Caco-2 (cell line): ENCODE measurements at regions of chr2 and their contacts with region 1.

Region 1: GRCh38 chr2:223797811-223798721 is 39.3 kb downstream of the AP1S3 start:
- DNase-seq: peak in 1 of 2 experiments; percentile 50
- H3K4me3 ChIP-seq: no peak overlapping the region
- H3K4me3 Mint-ChIP-seq: peak overlapping the region; percentile 12
- H3K27ac Mint-ChIP-seq: peak overlapping the region; percentile 75
- H3K4me1 ChIP-seq: peaks cover 90% of the 10 kb centered on the region
- H3K4me1 Mint-ChIP-seq: peaks cover 55% of the 10 kb centered on the region
- H3K27me3 ChIP-seq: no peaks in the 10 kb centered on the region
- H3K27me3 Mint-ChIP-seq: no peaks in the 10 kb centered on the region
- CTCF ChIP-seq: peak; percentile 56 to 72

Region 2: DNA sequence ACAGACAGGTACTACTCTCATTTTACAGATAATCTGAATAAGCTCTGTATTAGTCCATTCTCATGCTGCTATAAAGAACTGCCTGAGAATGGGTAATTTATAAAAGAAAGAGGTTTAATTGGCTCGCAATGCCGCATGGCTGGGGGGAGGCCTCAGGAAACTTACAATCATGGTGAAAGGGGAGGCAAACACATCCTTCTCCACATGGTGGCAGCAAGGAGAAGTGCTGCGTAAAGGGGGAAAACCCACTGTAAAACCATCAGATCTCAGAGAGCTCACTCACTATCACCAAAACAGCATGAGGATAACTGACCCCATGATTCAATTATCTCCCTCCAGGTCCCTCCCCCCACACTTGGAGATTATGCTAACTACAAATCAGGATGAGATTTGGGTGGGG is 491.7 kb before region 1 on chr2:
- CTCF ChIA-PET with region 1: no interaction called
- POLR2A ChIA-PET with region 1: no interaction called
- intact Hi-C with region 1: loop called (anchors 1 kb)
- DNase-seq: peak in 1 of 2 experiments; percentile 36
- H3K4me3 ChIP-seq: no peak overlapping the region
- H3K4me3 Mint-ChIP-seq: no peak overlapping the region
- H3K27ac Mint-ChIP-seq: no peak overlapping the region
- H3K4me1 ChIP-seq: no peaks in the 10 kb centered on the region
- H3K4me1 Mint-ChIP-seq: no peaks in the 10 kb centered on the region
- H3K27me3 ChIP-seq: no peaks in the 10 kb centered on the region; the same call in 1 of the 2 replicates
- H3K27me3 Mint-ChIP-seq: peaks cover 3% of the 10 kb centered on the region
- CTCF ChIP-seq: peak; percentile 71 to 74

Region 3: GRCh38 chr2:223674998-223675609 is 123.0 kb before region 1 on chr2:
- CTCF ChIA-PET with region 1: interaction called, 6 read pairs
- POLR2A ChIA-PET with region 1: no interaction called
- intact Hi-C with region 1: loop called (anchors 1 kb)
- DNase-seq: peak; percentile 52 to 70
- H3K4me3 ChIP-seq: no peak overlapping the region
- H3K4me3 Mint-ChIP-seq: no peak overlapping the region
- H3K27ac Mint-ChIP-seq: no peak overlapping the region
- H3K4me1 ChIP-seq: no peaks in the 10 kb centered on the region
- H3K4me1 Mint-ChIP-seq: peaks cover 7% of the 10 kb centered on the region
- H3K27me3 ChIP-seq: no peaks in the 10 kb centered on the region
- H3K27me3 Mint-ChIP-seq: peaks cover 3% of the 10 kb centered on the region
- CTCF ChIP-seq: peak; percentile 88 to 97

Region 4: GRCh38 chr2:223727562-223727961 is 70.5 kb before region 1 on chr2:
- CTCF ChIA-PET with region 1: interaction called, 4 read pairs
- POLR2A ChIA-PET with region 1: no interaction called
- intact Hi-C with region 1: loop called (anchors 1 kb)
- DNase-seq: peak; percentile 72 to 73
- H3K4me3 ChIP-seq: no peak overlapping the region
- H3K4me3 Mint-ChIP-seq: no peak overlapping the region
- H3K27ac Mint-ChIP-seq: no peak overlapping the region
- H3K4me1 ChIP-seq: peaks cover 32% of the 10 kb centered on the region
- H3K4me1 Mint-ChIP-seq: peaks cover 21% of the 10 kb centered on the region
- H3K27me3 ChIP-seq: no peaks in the 10 kb centered on the region
- H3K27me3 Mint-ChIP-seq: no peaks in the 10 kb centered on the region
- CTCF ChIP-seq: peak; percentile 82 to 88

Region 5: GRCh38 chr2:223815186-223815883 is 17.3 kb after region 1 on chr2:
- CTCF ChIA-PET with region 1: no interaction called
- POLR2A ChIA-PET with region 1: no interaction called
- intact Hi-C with region 1: no loop called
- DNase-seq: no peak
- H3K4me3 ChIP-seq: no peak overlapping the region
- H3K4me3 Mint-ChIP-seq: no peak overlapping the region
- H3K27ac Mint-ChIP-seq: peak overlapping the region; percentile 42
- H3K4me1 ChIP-seq: peaks cover 18% of the 10 kb centered on the region
- H3K4me1 Mint-ChIP-seq: peaks cover 29% of the 10 kb centered on the region
- H3K27me3 ChIP-seq: no peaks in the 10 kb centered on the region
- H3K27me3 Mint-ChIP-seq: no peaks in the 10 kb centered on the region
- CTCF ChIP-seq: no peak

Region 6: GRCh38 chr2:223837287-223838061 is 39.4 kb after region 1 on chr2 and contains the start of gene AP1S3:
- CTCF ChIA-PET with region 1: interaction called, 6 read pairs
- POLR2A ChIA-PET with region 1: no interaction called
- intact Hi-C with region 1: loop called (anchors 1 kb)
- DNase-seq: peak; percentile 97 to 98
- H3K4me3 ChIP-seq: peak within 1 kb of the TSS; percentile 80
- H3K4me3 Mint-ChIP-seq: peak within 1 kb of the TSS; percentile 90
- H3K27ac Mint-ChIP-seq: peak within 1 kb of the TSS; percentile 75
- H3K4me1 ChIP-seq: peaks cover 40% of the 10 kb centered on the region
- H3K4me1 Mint-ChIP-seq: peaks cover 48% of the 10 kb centered on the region
- H3K27me3 ChIP-seq: no peaks in the 10 kb centered on the region
- H3K27me3 Mint-ChIP-seq: no peaks in the 10 kb centered on the region
- CTCF ChIP-seq: peak in 1 of 2 experiments; percentile 21
- total RNA-seq, gene AP1S3: 180 TPM in 2 replicates

Region 7: DNA sequence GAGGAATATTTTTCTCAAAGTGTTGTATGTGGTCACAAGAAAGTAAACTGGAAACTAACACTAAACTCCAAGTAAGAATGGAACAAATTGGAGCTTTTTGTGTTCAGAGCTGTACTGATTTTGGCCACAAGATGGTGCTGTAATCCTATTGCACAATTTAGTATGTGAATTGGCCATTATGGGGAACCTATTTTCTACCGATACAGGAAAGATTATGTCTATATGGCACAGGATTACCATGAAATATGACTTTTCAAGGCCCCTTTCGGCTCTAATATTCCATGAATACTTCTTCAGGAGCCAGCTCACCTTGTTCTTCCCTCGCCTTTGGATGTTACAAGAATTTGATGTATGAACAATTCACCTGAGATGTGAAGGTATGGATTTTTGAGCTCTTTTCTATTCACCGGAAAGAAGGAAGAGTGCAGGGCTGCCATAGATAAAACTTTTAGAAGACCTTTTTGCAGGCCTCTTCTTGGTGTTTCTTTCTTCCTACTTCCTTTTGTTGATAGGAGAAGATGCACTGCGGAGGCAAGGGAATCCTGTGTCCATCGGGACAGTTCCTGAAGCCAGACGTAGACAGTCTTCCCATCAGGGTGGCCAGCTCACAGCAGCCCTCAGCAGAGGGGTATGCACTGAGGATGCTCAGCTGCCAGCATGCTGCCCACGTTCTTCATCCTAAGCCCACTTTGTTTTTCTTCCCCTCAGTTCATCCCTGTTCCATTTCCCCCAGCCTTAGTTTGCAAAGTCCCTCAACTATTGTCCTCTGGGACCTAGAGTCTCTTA is 172.5 kb after region 1 on chr2:
- CTCF ChIA-PET with region 1: no interaction called
- POLR2A ChIA-PET with region 1: no interaction called
- intact Hi-C with region 1: no loop called
- DNase-seq: peak in 1 of 2 experiments; percentile 76
- H3K4me3 ChIP-seq: no peak overlapping the region
- H3K4me3 Mint-ChIP-seq: no peak overlapping the region
- H3K27ac Mint-ChIP-seq: no peak overlapping the region
- H3K4me1 ChIP-seq: no peaks in the 10 kb centered on the region
- H3K4me1 Mint-ChIP-seq: no peaks in the 10 kb centered on the region
- H3K27me3 ChIP-seq: no peaks in the 10 kb centered on the region
- H3K27me3 Mint-ChIP-seq: no peaks in the 10 kb centered on the region
- CTCF ChIP-seq: peak; percentile 95 to 98

Region 8: GRCh38 chr2:224461391-224461790 is 663.3 kb after region 1 on chr2:
- CTCF ChIA-PET with region 1: no interaction called
- POLR2A ChIA-PET with region 1: no interaction called
- intact Hi-C with region 1: no loop called
- DNase-seq: no peak
- H3K4me3 ChIP-seq: no peak overlapping the region
- H3K4me3 Mint-ChIP-seq: no peak overlapping the region
- H3K27ac Mint-ChIP-seq: no peak overlapping the region
- H3K4me1 ChIP-seq: no peaks in the 10 kb centered on the region
- H3K4me1 Mint-ChIP-seq: no peaks in the 10 kb centered on the region
- H3K27me3 ChIP-seq: no peaks in the 10 kb centered on the region
- H3K27me3 Mint-ChIP-seq: no peaks in the 10 kb centered on the region
- CTCF ChIP-seq: no peak